AG04450 (cell line): ENCODE measurements at regions of chr12 and their contacts with region 1.

Region 1: GRCh38 chr12:43428088-43428600 is 123.9 kb downstream of the ADAMTS20 start:
- DNase-seq: no peak
- H3K4me3 ChIP-seq: no peak overlapping the region
- H3K27ac ChIP-seq: no peak overlapping the region
- H3K27me3 ChIP-seq: peaks cover 5% of the 10 kb centered on the region
- CTCF ChIP-seq: no peak

Region 2: GRCh38 chr12:43444940-43445564 is 16.9 kb after region 1 on chr12:
- CTCF ChIA-PET with region 1: interaction called, 30 read pairs
- POLR2A ChIA-PET with region 1: no interaction called
- DNase-seq: peak; percentile 18
- H3K4me3 ChIP-seq: no peak overlapping the region
- H3K27ac ChIP-seq: no peak overlapping the region
- H3K27me3 ChIP-seq: no peaks in the 10 kb centered on the region
- CTCF ChIP-seq: peak; percentile 92